ENCODE measurements at regions of chr2 and their contacts with region 1.

Region 1: GRCh38 chr2:104849618-104850141 is 4.2 kb upstream of the POU3F3 start:
- DNase-seq: peak; percentile 76
- H3K4me3 Mint-ChIP-seq: no peak overlapping the region
- H3K27ac Mint-ChIP-seq: no peak overlapping the region
- H3K4me1 Mint-ChIP-seq: peaks cover 30% of the 10 kb centered on the region
- H3K27me3 Mint-ChIP-seq: peaks cover 81% of the 10 kb centered on the region

Region 2: GRCh38 chr2:104862058-104862941 is 12.6 kb after region 1 on chr2:
- CTCF ChIA-PET with region 1: interaction called, 19 read pairs
- POLR2A ChIA-PET with region 1: no interaction called
- intact Hi-C with region 1: no loop called
- DNase-seq: no peak
- H3K4me3 Mint-ChIP-seq: peak overlapping the region; percentile 23
- H3K27ac Mint-ChIP-seq: no peak overlapping the region
- H3K4me1 Mint-ChIP-seq: peaks cover 7% of the 10 kb centered on the region
- H3K27me3 Mint-ChIP-seq: peaks cover 75% of the 10 kb centered on the region

Region 3: GRCh38 chr2:104976603-104977120 is 127.0 kb after region 1 on chr2:
- CTCF ChIA-PET with region 1: no interaction called
- POLR2A ChIA-PET with region 1: no interaction called
- intact Hi-C with region 1: no loop called
- DNase-seq: peak; percentile 32
- H3K4me3 Mint-ChIP-seq: no peak overlapping the region
- H3K27ac Mint-ChIP-seq: no peak overlapping the region
- H3K4me1 Mint-ChIP-seq: peaks cover 6% of the 10 kb centered on the region
- H3K27me3 Mint-ChIP-seq: peaks cover 5% of the 10 kb centered on the region